ENCODE measurements at regions of chr1 and their contacts with region 1.

Region 1: GRCh38 chr1:50343323-50343722 is 79.9 kb downstream of the DMRTA2 start:
- DNase-seq: no peak
- H3K4me3 ChIP-seq: no peak overlapping the region
- H3K27ac ChIP-seq: no peak overlapping the region
- H3K27me3 ChIP-seq: no peaks in the 10 kb centered on the region
- CTCF ChIP-seq: no peak

Region 2: DNA sequence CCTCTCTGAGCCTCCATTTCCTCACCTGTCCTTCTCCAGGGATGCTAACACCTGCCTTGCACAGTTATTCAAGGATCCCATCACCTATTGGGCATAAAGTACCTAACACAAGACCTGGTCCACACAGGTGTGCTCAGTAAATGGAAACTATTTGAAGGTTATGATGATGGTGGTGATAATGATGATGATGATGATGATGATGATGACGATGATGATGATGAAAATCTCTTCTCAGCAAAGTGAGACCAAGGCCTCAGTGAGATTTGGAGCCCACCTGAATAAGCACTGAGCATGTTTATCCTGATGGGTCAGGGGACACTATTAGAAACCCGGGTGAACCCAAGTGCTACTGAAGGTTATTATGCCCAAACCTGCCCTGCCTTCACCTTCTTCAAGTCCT is 20.7 kb before region 1 on chr1:
- CTCF ChIA-PET with region 1: no interaction called
- POLR2A ChIA-PET with region 1: no interaction called
- DNase-seq: no peak
- H3K4me3 ChIP-seq: no peak overlapping the region
- H3K27ac ChIP-seq: no peak overlapping the region
- H3K27me3 ChIP-seq: no peaks in the 10 kb centered on the region
- CTCF ChIP-seq: no peak

Region 3: DNA sequence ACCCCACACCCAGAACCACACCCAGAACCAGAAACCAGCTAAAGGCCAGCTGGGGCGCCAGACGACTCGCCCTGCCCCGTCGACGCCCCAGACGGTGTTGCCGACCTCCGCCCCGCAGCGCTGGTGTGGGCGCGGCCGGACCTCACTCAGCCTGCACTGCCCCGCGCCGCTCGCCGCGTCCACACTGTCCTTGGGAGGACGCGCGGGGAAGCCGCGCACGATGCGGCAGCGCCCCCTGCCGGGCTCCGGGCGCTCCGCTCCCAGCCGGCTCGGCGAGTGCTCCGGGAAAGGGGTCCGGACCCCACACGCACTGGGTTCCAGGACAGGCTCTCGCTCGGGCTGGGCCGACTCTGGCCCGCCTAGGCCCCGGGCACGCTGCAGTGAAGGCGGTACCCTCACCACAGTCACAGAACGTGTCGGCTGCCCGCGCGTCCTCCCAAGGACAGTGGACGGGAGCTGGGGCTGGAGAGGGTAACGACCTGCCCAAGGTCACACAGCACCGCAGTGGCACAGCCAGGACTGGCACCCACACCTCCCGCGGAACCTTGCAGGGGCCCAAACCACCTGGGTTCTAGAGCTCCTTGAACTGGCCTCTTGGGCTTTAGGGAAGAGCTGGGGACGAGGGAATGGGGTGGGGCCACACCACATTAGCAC is 10.3 kb before region 1 on chr1:
- CTCF ChIA-PET with region 1: interaction called, 32 read pairs
- POLR2A ChIA-PET with region 1: no interaction called
- DNase-seq: no peak
- H3K4me3 ChIP-seq: peak overlapping the region; percentile 46
- H3K27ac ChIP-seq: no peak overlapping the region
- H3K27me3 ChIP-seq: peaks cover 17% of the 10 kb centered on the region
- CTCF ChIP-seq: peak; percentile 57

Region 4: GRCh38 chr1:50358962-50359361 is 15.6 kb after region 1 on chr1:
- CTCF ChIA-PET with region 1: no interaction called
- POLR2A ChIA-PET with region 1: no interaction called
- DNase-seq: no peak
- H3K4me3 ChIP-seq: no peak overlapping the region
- H3K27ac ChIP-seq: no peak overlapping the region
- H3K27me3 ChIP-seq: no peaks in the 10 kb centered on the region
- CTCF ChIP-seq: no peak

Region 5: DNA sequence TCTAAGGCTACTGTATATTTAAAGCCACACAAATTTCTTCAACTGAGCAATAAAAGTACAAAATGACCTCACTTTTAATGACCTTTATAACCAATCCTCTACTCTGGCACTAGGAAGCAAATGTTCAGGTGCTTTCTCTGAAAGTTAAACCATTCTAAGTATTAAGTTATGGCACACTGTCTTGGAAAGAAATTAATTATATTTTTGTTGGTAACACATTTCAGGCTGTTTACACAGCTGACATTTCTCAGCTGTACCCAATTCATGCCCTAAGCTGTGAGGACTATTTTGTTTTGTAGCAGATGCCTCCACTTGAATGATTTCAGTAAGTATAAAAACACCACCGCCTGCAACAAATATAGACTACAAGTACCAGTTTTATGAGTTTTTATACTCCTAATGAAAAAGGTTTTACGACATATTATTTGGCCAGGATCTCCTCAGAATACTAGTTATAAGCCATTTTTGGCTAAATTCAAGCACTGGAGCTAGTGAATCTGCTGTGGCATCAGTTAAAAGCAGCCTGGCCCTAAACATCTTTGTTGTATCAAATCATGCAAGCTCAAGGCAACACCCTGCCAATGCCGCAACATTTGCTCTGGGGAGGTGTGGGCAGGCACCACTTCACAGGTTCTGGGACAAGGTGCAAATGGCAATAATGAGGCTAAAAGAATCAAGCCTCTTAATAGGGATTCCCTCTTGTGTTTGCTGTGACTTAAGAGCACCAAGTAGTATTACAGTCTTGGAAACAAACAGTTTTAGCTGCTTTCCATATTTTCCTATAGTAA is 308.3 kb after region 1 on chr1:
- CTCF ChIA-PET with region 1: no interaction called
- POLR2A ChIA-PET with region 1: no interaction called
- DNase-seq: no peak
- H3K4me3 ChIP-seq: no peak overlapping the region
- H3K27ac ChIP-seq: no peak overlapping the region
- H3K27me3 ChIP-seq: no peaks in the 10 kb centered on the region
- CTCF ChIP-seq: no peak